Activated T-helper 1 cell treated with anti-CD3 and anti-CD28 coated beads, Interleukin-12 subunit alpha, Interleukin-12 subunit beta, Interleukin-2, Interleukin-4 antibody, amounts not matched to agents 30 ng/mL and 10 ng/mL and 1 ng/mL, durations not matched to agents 14 hours and 24 hours and 36 hours (primary cell): ENCODE measurements at regions of chr3 and their contacts with region 1.

Region 1: DNA sequence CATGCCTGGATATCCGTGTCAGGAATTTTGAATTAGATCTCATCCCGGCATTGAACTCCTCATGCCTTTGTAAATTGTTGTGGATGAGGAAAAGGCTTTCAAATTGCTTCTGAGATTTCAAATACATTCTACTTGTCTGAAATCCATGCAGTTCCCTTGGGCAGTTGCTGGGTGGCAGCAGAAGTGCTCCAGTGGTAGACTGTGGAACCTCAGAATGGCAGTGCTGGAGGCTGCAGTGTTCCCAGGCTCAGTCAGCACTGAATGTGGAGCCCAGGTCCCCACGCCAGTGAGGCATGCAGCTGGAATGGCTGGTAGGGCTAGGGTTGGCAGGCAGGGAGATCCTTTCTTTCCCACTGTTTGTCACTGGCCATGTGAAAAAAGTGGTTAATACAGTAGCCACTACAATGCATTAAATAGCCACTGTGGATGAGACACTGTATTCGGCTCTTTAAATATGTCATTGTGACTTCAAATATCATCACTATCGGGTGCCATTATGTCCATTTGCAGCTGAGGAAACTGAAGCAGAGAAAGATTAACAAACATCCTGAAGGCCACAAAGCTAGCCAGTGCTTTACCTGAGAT is 98.6 kb downstream of the TPRG1 start:
- DNase-seq: peak; percentile 7
- H3K4me3 Mint-ChIP-seq: no peak overlapping the region
- H3K27ac Mint-ChIP-seq: no peak overlapping the region
- H3K4me1 Mint-ChIP-seq: peaks cover 15% of the 10 kb centered on the region
- H3K27me3 Mint-ChIP-seq: no peaks in the 10 kb centered on the region

Region 2: GRCh38 chr3:189394599-189395121 is 124.3 kb after region 1 on chr3:
- intact Hi-C with region 1: loop called (anchors 5 kb)
- DNase-seq: no peak
- H3K4me3 Mint-ChIP-seq: peak overlapping the region; percentile 20
- H3K27ac Mint-ChIP-seq: peak overlapping the region; percentile 76
- H3K4me1 Mint-ChIP-seq: peaks cover 34% of the 10 kb centered on the region
- H3K27me3 Mint-ChIP-seq: no peaks in the 10 kb centered on the region

Region 3: DNA sequence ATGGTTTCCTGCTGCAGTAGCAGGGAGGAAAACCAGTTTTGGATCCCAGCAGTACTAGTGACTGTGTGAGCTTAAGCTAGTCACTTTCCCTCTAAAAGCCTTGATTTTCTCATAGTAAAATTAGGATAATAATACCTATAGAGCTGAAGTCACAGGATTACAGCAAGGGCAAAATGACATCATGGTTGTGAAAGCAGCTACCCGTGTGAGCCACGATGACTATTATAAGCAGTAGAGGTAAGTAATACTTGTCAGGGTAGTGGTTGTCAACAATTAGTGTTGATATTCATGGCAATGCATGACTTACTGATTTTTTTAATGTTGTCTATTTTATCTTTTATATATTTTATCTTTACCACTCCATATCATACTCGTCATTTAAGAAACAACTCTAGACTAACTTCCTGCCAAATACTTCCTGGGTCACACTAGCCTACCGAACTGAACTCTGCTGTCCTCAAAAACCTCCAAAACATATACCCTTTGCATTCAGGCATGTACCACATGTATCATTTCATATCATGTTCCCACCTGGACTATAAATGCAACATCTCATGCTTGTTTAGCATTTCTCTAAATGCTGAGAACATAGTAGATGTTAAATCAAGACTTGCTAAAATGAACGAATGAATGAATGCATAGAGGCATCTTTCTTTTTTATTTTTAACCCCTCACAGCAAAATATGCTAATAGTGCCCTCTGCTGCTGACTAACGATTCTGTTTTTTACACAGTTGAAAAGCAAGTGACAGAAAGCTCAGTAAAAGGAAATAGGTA is 677.8 kb after region 1 on chr3:
- intact Hi-C with region 1: loop called (anchors 1 kb)
- DNase-seq: no peak
- H3K4me3 Mint-ChIP-seq: no peak overlapping the region
- H3K27ac Mint-ChIP-seq: no peak overlapping the region
- H3K4me1 Mint-ChIP-seq: peaks cover 6% of the 10 kb centered on the region
- H3K27me3 Mint-ChIP-seq: peaks cover 3% of the 10 kb centered on the region